Right cardiac atrium (tissue), 5 donors: ENCODE measurements at regions of chr6 and their contacts with region 1.

Region 1: GRCh38 chr6:143695130-143695968 is 17.6 kb downstream of the PHACTR2 start:
- DNase-seq: no peak
- ATAC-seq: peak; percentile 53
- H3K4me3 ChIP-seq: no peak overlapping the region
- H3K27ac ChIP-seq: no peak overlapping the region
- H3K4me1 ChIP-seq: peaks cover 3% of the 10 kb centered on the region
- H3K27me3 ChIP-seq: no peaks in the 10 kb centered on the region

Region 2: GRCh38 chr6:143745166-143746133 is 50.1 kb after region 1 on chr6:
- intact Hi-C with region 1: loop called in 1 of 4 experiments (anchors 10 kb)
- DNase-seq: peak in 1 of 3 donors; percentile 46
- ATAC-seq: peak; percentile 4 to 68
- H3K4me3 ChIP-seq: peak overlapping the region; percentile 23
- H3K27ac ChIP-seq: peak overlapping the region; percentile 6
- H3K4me1 ChIP-seq: peaks cover 28% of the 10 kb centered on the region
- H3K27me3 ChIP-seq: no peaks in the 10 kb centered on the region